A673 (cell line): ENCODE measurements at regions of chr22 and their contacts with region 1.

Region 1: DNA sequence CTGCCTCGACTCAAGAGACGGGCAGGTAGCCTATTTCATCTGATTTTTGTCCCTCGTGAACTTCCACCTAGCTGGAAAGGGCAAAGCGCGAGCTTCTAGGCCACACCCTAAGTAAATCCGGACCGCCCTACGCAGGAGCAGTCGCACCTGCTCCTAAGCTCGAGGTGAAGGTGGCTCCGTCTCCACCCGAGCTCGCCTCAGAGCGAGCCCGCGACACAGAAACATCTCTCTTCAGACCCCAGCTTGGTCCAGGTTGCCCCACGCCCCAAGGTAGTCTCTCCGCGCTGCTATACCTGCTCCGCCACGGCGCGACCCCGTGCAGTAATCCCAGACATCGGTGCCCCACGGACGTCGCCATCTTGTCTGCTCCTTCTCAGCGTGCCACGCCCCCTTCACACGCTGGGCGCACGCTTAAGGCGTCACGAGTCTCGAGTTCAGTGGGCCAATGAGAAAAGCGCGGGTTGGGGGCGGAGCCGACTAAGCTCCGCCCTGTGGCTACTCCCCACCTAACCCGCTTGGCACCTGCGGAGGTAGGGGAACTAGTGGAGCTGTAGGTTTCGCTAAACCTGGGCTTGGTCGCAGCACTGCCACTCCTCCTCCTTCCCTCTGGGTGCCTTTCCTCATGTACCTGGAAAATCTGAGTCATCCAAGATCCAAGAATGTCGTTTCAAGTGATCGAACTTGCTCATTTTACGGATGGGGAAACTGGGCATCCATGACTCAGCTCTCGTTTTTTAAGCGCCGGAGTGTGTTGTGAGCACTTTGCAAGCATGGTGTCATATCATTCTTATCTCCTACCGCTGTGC is at the start of gene PISD:
- DNase-seq: peak; percentile 97
- H3K4me3 ChIP-seq: peak within 1 kb of the TSS; percentile 76
- H3K27ac ChIP-seq: peak within 1 kb of the TSS; percentile 75
- H3K4me1 ChIP-seq: peaks cover 5% of the 10 kb centered on the region
- H3K27me3 ChIP-seq: no peaks in the 10 kb centered on the region
- CTCF ChIP-seq: no peak
- total RNA-seq, gene PISD: 39.0 and 40.8 TPM in 2 replicates

Region 2: GRCh38 chr22:31943976-31944699 is 282.1 kb after region 1 on chr22 and contains the start of gene YWHAH:
- CTCF ChIA-PET with region 1: no interaction called
- POLR2A ChIA-PET with region 1: no interaction called
- intact Hi-C with region 1: loop called (anchors 5 kb)
- DNase-seq: peak; percentile 95
- H3K4me3 ChIP-seq: peak within 1 kb of the TSS; percentile 68
- H3K27ac ChIP-seq: peak within 1 kb of the TSS; percentile 96
- H3K4me1 ChIP-seq: peaks cover 22% of the 10 kb centered on the region
- H3K27me3 ChIP-seq: no peaks in the 10 kb centered on the region
- CTCF ChIP-seq: no peak
- total RNA-seq, gene YWHAH: 161 and 177 TPM in 2 replicates

Region 3: GRCh38 chr22:31970490-31971444 is 308.7 kb after region 1 on chr22:
- CTCF ChIA-PET with region 1: interaction called, 15 read pairs
- POLR2A ChIA-PET with region 1: no interaction called
- intact Hi-C with region 1: loop called (anchors 1 kb)
- DNase-seq: peak; percentile 90
- H3K4me3 ChIP-seq: peak overlapping the region; percentile 52
- H3K27ac ChIP-seq: no peak overlapping the region
- H3K4me1 ChIP-seq: no peaks in the 10 kb centered on the region
- H3K27me3 ChIP-seq: no peaks in the 10 kb centered on the region
- CTCF ChIP-seq: peak; percentile 90

Region 4: GRCh38 chr22:32080904-32081303 is 418.9 kb after region 1 on chr22:
- CTCF ChIA-PET with region 1: no interaction called
- POLR2A ChIA-PET with region 1: no interaction called
- intact Hi-C with region 1: loop called (anchors 10 kb)
- DNase-seq: peak; percentile 69
- H3K4me3 ChIP-seq: no peak overlapping the region
- H3K27ac ChIP-seq: no peak overlapping the region
- H3K4me1 ChIP-seq: peaks cover 5% of the 10 kb centered on the region
- H3K27me3 ChIP-seq: no peaks in the 10 kb centered on the region
- CTCF ChIP-seq: peak; percentile 69

Region 5: DNA sequence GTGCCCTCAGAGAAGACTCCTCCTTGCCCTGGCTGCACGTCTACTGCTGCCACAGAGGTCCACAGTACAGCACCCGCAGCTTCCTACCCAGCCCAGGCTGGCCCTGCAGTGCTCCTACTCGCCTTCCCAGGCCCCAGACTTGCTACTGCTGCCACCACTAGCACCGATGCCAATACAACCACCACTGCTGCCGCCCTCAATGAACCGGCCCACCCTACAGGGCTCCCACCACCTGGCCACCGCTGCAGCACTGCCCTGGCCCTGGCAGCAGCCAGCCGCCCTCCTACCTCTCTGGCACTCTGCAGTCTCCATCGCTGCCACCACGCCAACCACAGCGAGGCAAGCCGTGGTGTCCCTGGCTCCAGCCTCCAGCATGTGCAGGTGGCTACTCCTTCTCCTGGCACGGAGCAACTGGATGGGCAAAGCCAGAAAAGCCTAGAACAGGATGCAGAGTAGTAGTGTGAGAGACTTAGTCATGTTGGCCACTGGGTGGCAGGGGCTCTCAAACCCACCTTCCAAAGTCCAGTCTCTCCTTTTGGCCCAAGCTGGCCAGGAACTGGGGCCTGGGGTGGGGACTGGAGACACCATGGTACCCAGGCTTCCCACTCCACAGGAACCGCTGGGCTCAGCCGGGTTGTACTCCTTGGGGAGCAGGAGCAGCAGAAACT is 457.6 kb after region 1 on chr22:
- CTCF ChIA-PET with region 1: no interaction called
- POLR2A ChIA-PET with region 1: no interaction called
- intact Hi-C with region 1: no loop called
- DNase-seq: no peak
- H3K4me3 ChIP-seq: no peak overlapping the region
- H3K27ac ChIP-seq: no peak overlapping the region
- H3K4me1 ChIP-seq: no peaks in the 10 kb centered on the region
- H3K27me3 ChIP-seq: peaks cover 18% of the 10 kb centered on the region
- CTCF ChIP-seq: 0 out of 2 replicates have a peak, but pooled peaks have one; percentile 11